Caco-2 (cell line): ENCODE measurements at regions of chr5 and their contacts with region 1.

Region 1: DNA sequence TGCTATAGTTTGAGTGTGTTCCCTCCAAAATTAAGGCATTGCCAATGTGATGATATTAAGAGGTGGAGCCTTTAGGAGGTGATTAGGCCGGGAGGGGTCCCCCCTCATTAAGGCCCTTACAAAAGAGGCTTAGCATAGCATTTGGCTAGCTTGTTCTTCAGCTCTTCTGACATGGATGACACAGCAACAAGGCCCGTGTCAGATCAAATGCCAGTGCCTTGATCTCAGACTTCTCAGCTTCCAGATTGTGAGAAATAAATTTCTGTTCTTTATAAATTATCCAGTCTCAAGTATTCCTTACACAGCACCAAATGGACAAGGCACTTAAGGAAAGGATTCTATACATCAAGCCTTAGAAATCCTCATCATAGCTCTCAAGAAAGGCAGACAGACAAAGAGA is 31.8 kb downstream of the SLC38A9 start:
- DNase-seq: no peak
- H3K4me3 ChIP-seq: no peak overlapping the region
- H3K4me3 Mint-ChIP-seq: no peak overlapping the region
- H3K27ac Mint-ChIP-seq: no peak overlapping the region
- H3K4me1 ChIP-seq: no peaks in the 10 kb centered on the region
- H3K4me1 Mint-ChIP-seq: no peaks in the 10 kb centered on the region
- H3K27me3 ChIP-seq: no peaks in the 10 kb centered on the region
- H3K27me3 Mint-ChIP-seq: no peaks in the 10 kb centered on the region
- CTCF ChIP-seq: no peak

Region 2: GRCh38 chr5:55540024-55540423 is 140.3 kb before region 1 on chr5:
- CTCF ChIA-PET with region 1: no interaction called
- POLR2A ChIA-PET with region 1: no interaction called
- intact Hi-C with region 1: no loop called
- DNase-seq: no peak
- H3K4me3 ChIP-seq: no peak overlapping the region
- H3K4me3 Mint-ChIP-seq: no peak overlapping the region
- H3K27ac Mint-ChIP-seq: peak overlapping the region; percentile 75
- H3K4me1 ChIP-seq: peaks cover 28% of the 10 kb centered on the region
- H3K4me1 Mint-ChIP-seq: peaks cover 40% of the 10 kb centered on the region
- H3K27me3 ChIP-seq: no peaks in the 10 kb centered on the region
- H3K27me3 Mint-ChIP-seq: no peaks in the 10 kb centered on the region
- CTCF ChIP-seq: no peak

Region 3: GRCh38 chr5:55701462-55702103 is 21.2 kb after region 1 on chr5:
- CTCF ChIA-PET with region 1: no interaction called
- POLR2A ChIA-PET with region 1: no interaction called
- intact Hi-C with region 1: loop called (anchors 1 kb)
- DNase-seq: no peak
- H3K4me3 ChIP-seq: no peak overlapping the region
- H3K4me3 Mint-ChIP-seq: no peak overlapping the region
- H3K27ac Mint-ChIP-seq: no peak overlapping the region
- H3K4me1 ChIP-seq: no peaks in the 10 kb centered on the region
- H3K4me1 Mint-ChIP-seq: peaks cover 14% of the 10 kb centered on the region
- H3K27me3 ChIP-seq: no peaks in the 10 kb centered on the region
- H3K27me3 Mint-ChIP-seq: no peaks in the 10 kb centered on the region
- CTCF ChIP-seq: no peak